HEK293T (cell line): ENCODE measurements at regions of chr6 and their contacts with region 1.

Region 1: GRCh38 chr6:161744211-161745067 is 470.6 kb upstream of the AGPAT4 start:
- DNase-seq: no peak

Region 2: DNA sequence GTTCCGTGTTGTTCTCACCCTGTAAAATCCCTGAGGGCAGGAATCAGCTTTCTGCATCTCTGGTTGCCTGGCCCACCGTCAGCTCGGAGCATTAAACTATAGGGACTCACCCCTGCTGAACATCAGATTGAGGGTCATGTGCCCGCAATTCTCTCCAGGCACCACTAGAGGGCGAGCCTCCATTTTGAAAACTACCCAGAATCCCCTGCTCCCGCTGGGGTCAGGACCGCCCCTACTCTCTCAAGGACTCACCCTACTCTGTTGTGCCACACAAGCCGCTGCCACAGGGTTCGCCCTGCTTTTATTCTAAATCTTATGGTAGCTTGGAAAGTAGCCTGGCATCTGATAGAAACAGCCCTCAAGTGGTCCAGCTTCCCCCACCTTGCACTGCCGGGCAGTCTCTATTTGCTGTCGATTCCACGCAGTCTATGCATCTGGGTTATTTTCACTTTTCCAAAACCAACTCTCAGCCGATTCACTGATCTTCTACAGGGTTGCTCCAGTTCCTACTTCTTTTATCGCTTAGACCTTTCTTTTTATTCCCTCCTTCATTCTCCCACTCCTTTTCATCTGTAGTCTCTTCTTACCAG is 1426.0 kb after region 1 on chr6:
- CTCF ChIA-PET with region 1: interaction called, 10 read pairs
- POLR2A ChIA-PET with region 1: no interaction called
- DNase-seq: peak; percentile 60